ENCODE measurements at regions of chr22 and their contacts with region 1.

Region 1: GRCh38 chr22:41381329-41382097 is at the start of gene TEF:
- DNase-seq: peak; percentile 99
- H3K4me3 ChIP-seq: peak within 1 kb of the TSS; percentile 76
- H3K27ac ChIP-seq: peak within 1 kb of the TSS; percentile 59
- H3K4me1 ChIP-seq: peaks cover 24% of the 10 kb centered on the region
- CTCF ChIP-seq: no peak
- total RNA-seq, gene TEF: 4.3 and 6.8 TPM in 2 replicates

Region 2: GRCh38 chr22:41301105-41302020 is 80.2 kb before region 1 on chr22 and contains the start of gene ZC3H7B:
- CTCF ChIA-PET with region 1: no interaction called
- POLR2A ChIA-PET with region 1: no interaction called
- intact Hi-C with region 1: loop called (anchors 10 kb)
- DNase-seq: peak; percentile 92
- H3K4me3 ChIP-seq: peak within 1 kb of the TSS; percentile 99
- H3K27ac ChIP-seq: peak within 1 kb of the TSS; percentile 64
- H3K4me1 ChIP-seq: peaks cover 20% of the 10 kb centered on the region
- CTCF ChIP-seq: peak; percentile 67
- total RNA-seq, gene ZC3H7B: 42.4 and 46.7 TPM in 2 replicates

Region 3: DNA sequence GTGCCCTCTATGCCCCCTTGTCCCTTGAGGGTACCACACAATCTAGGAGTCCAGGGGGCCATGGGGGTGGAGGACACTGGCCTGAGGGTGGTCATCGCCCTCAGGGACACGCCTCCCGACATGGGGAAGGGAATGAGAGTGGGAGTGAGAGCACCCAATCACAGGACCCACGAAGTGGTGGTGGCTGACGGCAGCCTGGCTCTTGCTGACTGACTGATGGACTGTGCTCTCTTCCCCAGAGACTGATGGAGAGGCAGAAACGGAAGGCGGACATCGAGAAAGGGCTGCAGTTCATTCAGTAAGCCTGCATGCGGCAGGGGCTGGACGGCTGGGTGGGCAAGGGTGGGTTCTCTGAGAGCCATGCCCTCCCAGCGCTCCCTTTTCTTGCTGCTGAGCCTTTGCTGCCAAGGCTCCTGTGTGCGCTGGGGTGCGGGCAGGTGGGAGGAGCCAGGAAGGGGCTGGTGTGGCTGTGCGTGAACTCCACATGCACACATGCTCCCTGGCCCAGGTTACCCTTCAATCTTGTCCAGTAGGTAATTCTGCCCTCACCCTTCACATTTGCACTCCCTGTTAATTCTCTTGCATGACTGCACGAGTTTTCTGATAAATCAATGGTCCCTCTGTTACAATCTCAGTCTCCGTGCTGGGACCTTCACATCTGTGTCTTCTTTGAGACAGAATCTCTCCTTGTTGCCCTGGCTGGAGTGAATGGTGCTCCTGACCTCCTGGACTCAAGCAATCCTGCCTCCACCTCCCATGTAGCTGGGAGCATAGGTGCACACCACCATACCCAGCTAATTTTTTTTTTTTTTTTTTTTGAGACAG is 60.9 kb before region 1 on chr22:
- CTCF ChIA-PET with region 1: no interaction called
- POLR2A ChIA-PET with region 1: no interaction called
- intact Hi-C with region 1: no loop called
- DNase-seq: no peak
- H3K4me3 ChIP-seq: no peak overlapping the region
- H3K27ac ChIP-seq: no peak overlapping the region
- H3K4me1 ChIP-seq: no peaks in the 10 kb centered on the region
- CTCF ChIP-seq: no peak

Region 4: GRCh38 chr22:41448189-41448808 is 66.8 kb after region 1 on chr22:
- CTCF ChIA-PET with region 1: no interaction called
- POLR2A ChIA-PET with region 1: interaction called, 6 read pairs
- intact Hi-C with region 1: loop called (anchors 2 kb)
- DNase-seq: peak; percentile 97
- H3K4me3 ChIP-seq: peak overlapping the region; percentile 83
- H3K27ac ChIP-seq: peak overlapping the region; percentile 85
- H3K4me1 ChIP-seq: peaks cover 14% of the 10 kb centered on the region
- CTCF ChIP-seq: no peak